ENCODE measurements at regions of chr1 and their contacts with region 1.

Region 1: DNA sequence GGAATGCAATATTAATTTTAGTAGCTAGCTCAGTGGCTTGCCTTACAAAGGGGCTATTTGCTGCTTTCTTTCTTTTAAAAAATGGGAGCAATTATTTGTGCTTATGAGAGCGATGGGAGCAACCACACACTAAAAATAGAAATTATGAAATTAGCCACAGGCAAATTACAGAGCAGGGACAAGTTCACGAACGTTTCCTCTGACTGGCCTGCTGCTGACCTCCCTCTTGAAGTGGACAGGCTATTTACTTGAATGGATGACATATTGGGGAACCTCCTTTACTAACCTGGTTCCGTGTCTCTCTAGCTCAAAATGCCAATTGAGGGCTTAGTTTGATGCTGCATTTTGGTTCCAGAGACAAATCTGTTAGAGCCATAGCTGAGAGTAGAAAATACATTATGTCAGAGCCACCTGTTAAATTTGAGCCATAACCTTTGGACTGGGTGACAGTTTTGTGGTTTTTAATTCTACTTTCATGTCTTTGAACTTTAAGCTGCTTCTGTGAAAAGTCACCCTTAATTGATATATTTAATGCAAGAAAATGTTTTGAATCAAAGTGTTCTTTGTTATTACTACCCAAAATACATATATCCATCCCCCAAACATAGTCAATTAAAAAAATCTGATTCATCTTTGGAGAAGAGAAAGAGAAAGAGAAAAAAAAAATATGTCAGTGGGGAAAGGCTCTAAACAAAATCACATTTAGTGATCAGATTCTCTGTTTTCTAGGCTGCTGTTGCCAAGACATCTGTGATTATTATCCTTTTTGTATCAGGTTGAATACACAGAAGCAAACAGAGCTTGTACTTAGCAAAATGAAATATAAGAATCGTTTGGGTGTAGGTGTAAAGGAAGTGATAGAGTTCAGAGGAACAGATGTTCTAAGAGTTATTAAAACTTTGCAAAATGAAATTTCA is 351.9 kb downstream of the ADGRL2 start:
- DNase-seq: peak; percentile 40
- ATAC-seq: peak; percentile 85
- H3K4me3 ChIP-seq: no peak overlapping the region
- H3K27ac ChIP-seq: peak overlapping the region; percentile 33; the same call in 1 of the 2 replicates
- H3K4me1 ChIP-seq: no peaks in the 10 kb centered on the region
- H3K27me3 ChIP-seq: no peaks in the 10 kb centered on the region
- CTCF ChIP-seq: no peak
- EP300 ChIP-seq: peak in 1 of 2 experiments; percentile 50; a peak in 2 of 4 replicates
- POLR2A ChIP-seq: no peak
- RAD21 ChIP-seq: no peak

Region 2: DNA sequence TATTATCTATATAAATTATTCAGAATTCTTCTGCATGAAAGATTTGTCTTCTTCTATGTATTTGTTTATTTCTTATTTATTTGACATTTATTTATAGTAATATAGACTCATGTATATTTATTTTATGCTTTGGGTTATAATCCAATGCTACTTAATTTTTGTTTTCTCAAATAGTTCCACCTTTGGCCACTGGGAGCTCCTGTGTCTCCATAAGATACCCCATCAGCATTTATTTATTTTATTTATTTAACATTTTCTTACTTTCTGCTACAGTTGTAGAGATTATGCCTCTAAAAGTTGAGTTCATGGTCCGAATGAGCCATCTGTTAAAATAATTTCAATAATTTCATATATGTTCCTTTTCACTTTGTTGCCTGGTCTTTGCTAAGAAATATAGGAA is 62.5 kb before region 1 on chr1:
- CTCF ChIA-PET with region 1: interaction called, 5 read pairs
- POLR2A ChIA-PET with region 1: no interaction called
- RAD21 ChIA-PET with region 1: interaction called, 19 read pairs
- SMC1A ChIA-PET with region 1: interaction called, 23 read pairs
- in situ Hi-C with region 1: no loop called
- intact Hi-C with region 1: no loop called
- DNase-seq: no peak
- ATAC-seq: peak; percentile 65
- H3K4me3 ChIP-seq: no peak overlapping the region
- H3K27ac ChIP-seq: no peak overlapping the region
- H3K4me1 ChIP-seq: no peaks in the 10 kb centered on the region
- H3K27me3 ChIP-seq: no peaks in the 10 kb centered on the region
- CTCF ChIP-seq: peak; percentile 18 to 36 (median 24); a peak in 5 of 6 replicates
- EP300 ChIP-seq: no peak
- POLR2A ChIP-seq: no peak
- RAD21 ChIP-seq: peak; percentile 47; the same call in 1 of the 2 replicates

Region 3: DNA sequence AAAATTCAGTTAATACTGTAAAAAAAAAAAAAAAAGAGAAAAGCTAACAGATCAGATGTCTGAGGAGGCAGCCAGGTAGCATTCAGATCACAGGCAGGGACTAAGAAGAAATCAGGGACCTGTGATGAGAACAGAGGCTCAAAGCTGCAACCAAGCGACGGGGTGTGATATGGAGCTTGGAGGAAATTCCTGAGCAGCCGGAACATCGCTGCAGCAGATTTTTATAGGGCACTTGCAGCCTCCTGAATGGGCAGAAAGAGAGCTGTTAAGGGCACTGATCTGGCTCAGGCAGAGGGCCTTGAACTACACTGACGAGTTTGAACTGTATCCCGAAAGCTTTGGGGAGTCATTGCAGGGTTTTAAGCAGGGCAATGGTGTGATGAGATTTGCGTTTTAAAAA is 36.5 kb before region 1 on chr1:
- CTCF ChIA-PET with region 1: no interaction called
- POLR2A ChIA-PET with region 1: interaction called, 3 read pairs
- RAD21 ChIA-PET with region 1: no interaction called
- SMC1A ChIA-PET with region 1: interaction called, 43 read pairs
- in situ Hi-C with region 1: no loop called
- intact Hi-C with region 1: no loop called
- DNase-seq: no peak
- ATAC-seq: no peak
- H3K4me3 ChIP-seq: no peak overlapping the region
- H3K27ac ChIP-seq: no peak overlapping the region
- H3K4me1 ChIP-seq: no peaks in the 10 kb centered on the region
- H3K27me3 ChIP-seq: no peaks in the 10 kb centered on the region
- CTCF ChIP-seq: no peak
- EP300 ChIP-seq: no peak
- POLR2A ChIP-seq: no peak
- RAD21 ChIP-seq: no peak

Region 4: DNA sequence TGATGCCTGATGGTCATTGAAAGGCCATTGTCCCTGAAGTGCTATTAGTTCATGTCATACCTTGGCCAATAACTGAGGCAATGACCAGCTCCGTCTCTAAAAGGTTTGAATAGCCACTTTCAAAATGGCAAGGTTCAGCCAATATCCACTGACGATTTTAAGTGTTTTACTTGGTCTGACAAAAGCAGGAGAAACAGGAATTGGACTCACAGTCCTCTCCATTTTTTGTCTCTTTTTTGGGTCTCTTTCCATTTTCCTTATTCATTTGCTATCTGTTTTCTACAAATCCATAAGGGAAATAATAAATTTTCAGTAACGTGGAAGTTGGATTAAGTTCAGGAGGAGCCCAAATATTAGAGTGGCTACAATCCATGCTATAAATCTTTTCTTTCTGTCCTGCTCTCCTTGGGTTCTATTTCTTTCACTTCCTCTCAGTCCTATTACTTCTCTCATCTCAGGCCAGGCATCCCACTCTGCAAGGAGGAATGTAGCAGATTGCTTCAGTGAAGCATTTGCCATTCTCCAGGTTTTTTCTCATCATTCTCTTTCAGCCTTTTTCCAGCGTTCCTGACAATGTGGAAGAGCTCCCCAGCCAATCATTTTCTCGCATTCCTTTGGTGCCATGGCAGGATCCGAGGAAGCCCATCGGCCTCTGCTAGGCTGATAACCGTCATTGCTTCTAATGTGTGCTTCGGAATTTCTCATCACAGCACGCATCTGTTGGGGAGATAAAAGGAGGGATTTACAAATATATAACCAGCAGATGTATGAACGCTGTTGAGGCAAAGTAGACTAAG is 62.6 kb after region 1 on chr1:
- CTCF ChIA-PET with region 1: interaction called, 3 read pairs
- POLR2A ChIA-PET with region 1: no interaction called
- RAD21 ChIA-PET with region 1: interaction called, 10 read pairs
- SMC1A ChIA-PET with region 1: interaction called, 5 read pairs
- in situ Hi-C with region 1: no loop called
- intact Hi-C with region 1: no loop called
- DNase-seq: no peak
- ATAC-seq: no peak
- H3K4me3 ChIP-seq: no peak overlapping the region
- H3K27ac ChIP-seq: no peak overlapping the region
- H3K4me1 ChIP-seq: no peaks in the 10 kb centered on the region
- H3K27me3 ChIP-seq: no peaks in the 10 kb centered on the region
- CTCF ChIP-seq: no peak
- EP300 ChIP-seq: no peak
- POLR2A ChIP-seq: no peak
- RAD21 ChIP-seq: no peak

Region 5: DNA sequence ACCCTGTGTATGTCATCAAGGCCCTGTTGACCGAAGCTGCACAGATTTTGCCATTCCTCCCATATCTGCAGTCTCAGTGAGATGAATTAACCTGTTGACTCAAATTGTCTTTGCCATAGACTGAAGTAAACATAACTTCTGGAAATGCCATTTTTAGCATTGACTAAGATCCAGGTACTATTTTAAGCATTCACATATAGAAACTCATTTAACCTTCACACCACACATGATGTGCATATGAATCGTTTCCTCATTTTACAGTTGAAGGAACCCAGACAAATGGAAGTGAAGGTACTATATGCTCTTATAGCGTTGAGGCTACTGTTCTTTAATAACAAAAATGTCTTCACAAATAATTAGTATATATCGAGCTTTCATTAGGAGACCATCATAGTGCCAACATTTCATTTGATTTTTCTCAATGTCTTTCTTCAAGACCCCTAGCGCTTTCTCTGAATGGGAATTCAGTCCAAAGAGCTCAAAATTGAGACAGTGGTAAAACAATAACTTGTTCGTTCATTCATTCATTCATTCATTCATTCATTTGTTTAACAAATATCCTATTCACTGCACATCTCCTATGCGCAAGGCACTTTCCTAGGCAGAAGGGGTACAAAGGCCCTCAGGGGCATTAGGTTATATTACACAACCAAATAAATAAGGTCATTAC is 92.9 kb after region 1 on chr1:
- CTCF ChIA-PET with region 1: interaction called, 4 read pairs
- POLR2A ChIA-PET with region 1: no interaction called
- RAD21 ChIA-PET with region 1: interaction called, 16 read pairs
- SMC1A ChIA-PET with region 1: interaction called, 12 read pairs
- in situ Hi-C with region 1: no loop called
- intact Hi-C with region 1: no loop called
- DNase-seq: no peak
- ATAC-seq: peak; percentile 91
- H3K4me3 ChIP-seq: no peak overlapping the region
- H3K27ac ChIP-seq: no peak overlapping the region
- H3K4me1 ChIP-seq: no peaks in the 10 kb centered on the region
- H3K27me3 ChIP-seq: no peaks in the 10 kb centered on the region
- CTCF ChIP-seq: no peak
- EP300 ChIP-seq: no peak
- POLR2A ChIP-seq: no peak
- RAD21 ChIP-seq: no peak

Region 6: GRCh38 chr1:82472489-82473131 is 320.0 kb after region 1 on chr1:
- CTCF ChIA-PET with region 1: no interaction called
- POLR2A ChIA-PET with region 1: no interaction called
- RAD21 ChIA-PET with region 1: no interaction called
- SMC1A ChIA-PET with region 1: no interaction called
- in situ Hi-C with region 1: no loop called
- intact Hi-C with region 1: no loop called
- DNase-seq: no peak
- ATAC-seq: no peak
- H3K4me3 ChIP-seq: no peak overlapping the region
- H3K27ac ChIP-seq: no peak overlapping the region
- H3K4me1 ChIP-seq: no peaks in the 10 kb centered on the region
- H3K27me3 ChIP-seq: no peaks in the 10 kb centered on the region
- CTCF ChIP-seq: no peak
- EP300 ChIP-seq: no peak
- POLR2A ChIP-seq: no peak
- RAD21 ChIP-seq: no peak